Activated naive CD4-positive, alpha-beta T cell treated with anti-CD3 and anti-CD28 coated beads for 36 hours (primary cell): ENCODE measurements at regions of chr1 and their contacts with region 1.

Region 1: GRCh38 chr1:201447911-201448871 is 20.8 kb downstream of the PHLDA3 start:
- DNase-seq: peak; percentile 81
- H3K4me3 Mint-ChIP-seq: no peak overlapping the region
- H3K27ac Mint-ChIP-seq: no peak overlapping the region
- H3K4me1 Mint-ChIP-seq: peaks cover 6% of the 10 kb centered on the region
- H3K27me3 Mint-ChIP-seq: peaks cover 24% of the 10 kb centered on the region

Region 2: GRCh38 chr1:201436393-201436792 is 11.8 kb before region 1 on chr1:
- CTCF ChIA-PET with region 1: interaction called, 39 read pairs
- intact Hi-C with region 1: no loop called
- DNase-seq: no peak
- H3K4me3 Mint-ChIP-seq: no peak overlapping the region
- H3K27ac Mint-ChIP-seq: no peak overlapping the region
- H3K4me1 Mint-ChIP-seq: peaks cover 5% of the 10 kb centered on the region
- H3K27me3 Mint-ChIP-seq: peaks cover 6% of the 10 kb centered on the region

Region 3: GRCh38 chr1:201468844-201469511 is 20.8 kb after region 1 on chr1 and contains the start of gene PHLDA3:
- CTCF ChIA-PET with region 1: interaction called, 15 read pairs
- intact Hi-C with region 1: loop called (anchors 1 kb)
- DNase-seq: peak; percentile 79
- H3K4me3 Mint-ChIP-seq: peak within 1 kb of the TSS; percentile 80
- H3K27ac Mint-ChIP-seq: peak within 1 kb of the TSS; percentile 44
- H3K4me1 Mint-ChIP-seq: peaks cover 6% of the 10 kb centered on the region
- H3K27me3 Mint-ChIP-seq: peaks cover 48% of the 10 kb centered on the region
- total RNA-seq, gene PHLDA3: 19.5 TPM

Region 4: DNA sequence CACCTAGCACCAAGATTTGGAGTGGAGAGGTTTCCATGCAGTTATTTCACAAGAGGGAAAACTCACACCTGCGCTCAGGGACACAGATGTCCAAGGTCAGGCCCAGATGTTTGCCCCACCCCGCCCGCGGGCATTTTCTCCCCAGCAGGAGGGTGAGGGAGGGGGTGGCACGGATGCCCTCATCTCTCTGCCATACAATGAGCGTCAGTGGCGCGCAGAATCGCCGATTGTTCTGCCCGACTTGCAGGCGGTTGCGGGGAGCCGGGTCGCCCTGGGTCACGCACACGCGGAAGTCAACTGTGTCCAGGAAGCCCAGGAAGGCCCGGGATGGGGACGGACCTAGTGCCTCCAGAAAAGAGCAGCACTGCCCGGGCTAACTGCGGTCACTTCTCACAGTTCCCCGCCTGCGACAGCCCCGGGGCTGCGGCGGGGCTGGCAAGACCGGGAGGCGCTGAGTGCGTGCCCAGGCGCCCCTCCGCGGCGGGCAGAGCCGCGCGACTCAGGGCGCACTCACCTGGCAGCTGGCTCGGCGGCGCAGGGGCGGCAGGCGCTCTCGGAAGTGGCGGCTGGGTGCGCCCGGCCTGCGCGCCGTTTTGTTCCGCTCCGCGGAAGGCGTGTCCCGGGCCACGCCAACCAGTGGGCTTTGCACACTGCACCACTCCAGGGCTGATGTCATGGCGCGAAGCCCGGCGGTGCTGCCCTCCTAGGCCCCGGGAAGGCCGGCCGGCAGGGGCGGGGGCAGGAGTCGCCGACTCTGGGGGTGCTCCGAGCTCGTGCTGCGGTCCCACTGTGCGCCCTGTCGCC is 58.6 kb after region 1 on chr1 and contains the start of gene CSRP1:
- CTCF ChIA-PET with region 1: interaction called, 121 read pairs
- intact Hi-C with region 1: no loop called
- DNase-seq: peak; percentile 89
- H3K4me3 Mint-ChIP-seq: peak within 1 kb of the TSS; percentile 83
- H3K27ac Mint-ChIP-seq: peak within 1 kb of the TSS; percentile 82
- H3K4me1 Mint-ChIP-seq: peaks cover 42% of the 10 kb centered on the region
- H3K27me3 Mint-ChIP-seq: no peaks in the 10 kb centered on the region
- total RNA-seq, gene CSRP1: 35.7 to 36.6 TPM

Region 5: GRCh38 chr1:201511941-201512539 is 63.8 kb after region 1 on chr1:
- CTCF ChIA-PET with region 1: interaction called, 121 read pairs
- intact Hi-C with region 1: loop called (anchors 1 kb)
- DNase-seq: no peak
- H3K4me3 Mint-ChIP-seq: no peak overlapping the region
- H3K27ac Mint-ChIP-seq: no peak overlapping the region
- H3K4me1 Mint-ChIP-seq: peaks cover 14% of the 10 kb centered on the region
- H3K27me3 Mint-ChIP-seq: no peaks in the 10 kb centered on the region

Region 6: DNA sequence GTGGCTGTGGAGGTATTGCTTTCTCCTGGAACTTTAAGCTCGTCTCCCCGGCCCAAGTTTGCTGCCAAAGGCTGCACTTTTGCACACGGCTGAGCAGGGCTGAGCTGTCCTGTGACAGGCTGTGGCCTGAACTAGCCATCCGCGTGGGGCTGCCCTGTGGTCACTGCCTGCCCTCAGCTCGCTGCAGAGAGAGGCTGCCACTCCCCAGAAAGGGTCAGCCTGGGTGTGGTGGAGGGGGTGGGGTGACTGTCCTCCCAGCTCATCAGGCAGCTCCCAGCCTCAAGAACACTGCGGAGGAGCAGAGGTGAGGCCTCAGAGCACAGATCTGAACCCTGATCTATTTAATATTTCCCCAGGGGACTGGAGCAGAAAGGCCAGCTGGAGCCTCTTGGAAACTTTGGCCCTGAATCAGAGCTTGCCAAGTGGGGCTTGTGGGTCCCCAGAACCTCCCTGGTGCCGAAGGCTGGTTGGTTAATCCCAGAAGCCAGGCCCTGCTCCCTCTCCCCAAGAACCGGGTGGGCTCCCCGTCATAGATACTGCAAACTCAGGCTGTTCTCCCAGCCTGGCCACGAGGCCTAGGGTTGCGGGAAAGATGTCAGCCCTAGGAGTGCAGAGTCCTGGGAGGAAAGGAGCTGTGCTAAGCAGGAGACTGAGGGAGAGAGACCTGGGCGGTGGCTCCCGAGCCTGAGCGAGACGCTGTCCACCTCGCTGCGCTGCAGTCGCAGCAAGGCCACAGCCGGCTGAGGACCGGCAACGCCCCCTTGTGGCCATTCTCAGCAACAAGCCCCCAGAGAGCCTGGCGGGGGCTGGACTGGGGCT is 255.6 kb after region 1 on chr1:
- CTCF ChIA-PET with region 1: interaction called, 3 read pairs
- intact Hi-C with region 1: loop called (anchors 5 kb)
- DNase-seq: peak; percentile 80
- H3K4me3 Mint-ChIP-seq: no peak overlapping the region
- H3K27ac Mint-ChIP-seq: no peak overlapping the region
- H3K4me1 Mint-ChIP-seq: no peaks in the 10 kb centered on the region
- H3K27me3 Mint-ChIP-seq: no peaks in the 10 kb centered on the region

Region 7: DNA sequence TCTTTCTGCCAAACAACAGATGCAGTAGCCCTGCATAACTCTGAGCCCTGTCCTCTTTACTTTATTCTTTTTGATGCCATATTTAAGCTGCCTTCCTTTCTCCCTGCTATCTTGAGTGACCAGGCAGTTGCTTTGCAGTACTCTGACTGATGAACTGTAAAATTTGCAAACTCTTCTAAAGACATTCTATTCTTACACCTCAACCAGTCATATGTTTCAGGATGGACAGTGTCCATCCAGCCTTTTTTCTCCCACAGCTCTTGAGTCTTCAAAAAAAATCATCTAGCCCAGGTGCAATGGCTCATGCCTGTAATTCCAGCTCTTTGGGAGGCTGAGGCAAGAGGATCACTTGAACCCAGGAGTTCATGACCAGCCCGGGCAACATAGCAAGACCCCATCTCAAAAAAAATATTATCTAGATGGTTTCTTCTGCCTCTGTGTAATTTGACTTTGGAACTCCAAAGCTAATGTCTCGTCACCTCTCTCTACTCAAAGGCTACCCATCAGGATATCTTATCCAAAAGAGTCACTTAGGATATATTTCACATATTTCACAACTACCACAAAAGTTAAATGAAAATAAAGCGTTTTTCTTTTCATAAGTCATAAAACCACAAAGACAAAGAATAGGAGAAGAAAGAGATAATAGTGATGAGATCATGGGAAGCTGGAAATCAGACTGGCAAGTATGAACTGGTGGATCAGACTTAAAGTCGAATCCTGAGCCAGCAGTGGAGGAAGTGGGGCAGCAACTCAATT is 326.2 kb after region 1 on chr1:
- CTCF ChIA-PET with region 1: no interaction called
- intact Hi-C with region 1: no loop called
- DNase-seq: no peak
- H3K4me3 Mint-ChIP-seq: no peak overlapping the region
- H3K27ac Mint-ChIP-seq: no peak overlapping the region
- H3K4me1 Mint-ChIP-seq: no peaks in the 10 kb centered on the region
- H3K27me3 Mint-ChIP-seq: no peaks in the 10 kb centered on the region